ENCODE measurements at regions of chr21 and their contacts with region 1.

Region 1: GRCh38 chr21:39441502-39442475 is 3.8 kb downstream of the LCA5L start:
- DNase-seq: peak; percentile 51
- CTCF ChIP-seq: peak; percentile 65

Region 2: GRCh38 chr21:39422527-39423241 is 19.1 kb before region 1 on chr21:
- CTCF ChIA-PET with region 1: interaction called, 35 read pairs
- POLR2A ChIA-PET with region 1: no interaction called
- DNase-seq: peak; percentile 34
- CTCF ChIP-seq: no peak

Region 3: DNA sequence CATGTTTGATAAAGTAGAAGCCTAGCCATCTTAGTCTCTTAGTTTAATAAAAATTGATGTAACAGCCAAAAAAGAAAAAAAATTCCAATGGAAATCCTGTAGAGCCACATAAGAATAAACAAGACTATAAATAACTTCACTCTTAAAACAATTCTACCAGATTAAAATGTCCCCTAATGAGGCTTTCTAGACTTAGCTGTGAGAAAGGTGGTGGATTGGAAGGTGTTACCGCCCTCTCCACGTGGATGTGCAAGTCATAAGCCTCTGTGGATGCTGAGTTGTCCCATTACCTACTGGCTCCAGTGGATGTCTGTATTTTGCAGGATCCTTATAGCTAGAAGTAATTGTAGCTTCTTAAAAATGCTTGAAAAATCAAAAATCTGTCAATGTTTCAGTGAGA is 10.8 kb before region 1 on chr21:
- CTCF ChIA-PET with region 1: interaction called, 15 read pairs
- POLR2A ChIA-PET with region 1: no interaction called
- DNase-seq: no peak
- CTCF ChIP-seq: no peak

Region 4: GRCh38 chr21:39518138-39518846 is 76.5 kb after region 1 on chr21:
- CTCF ChIA-PET with region 1: no interaction called
- POLR2A ChIA-PET with region 1: no interaction called
- DNase-seq: peak; percentile 79
- CTCF ChIP-seq: peak; percentile 82